CD4-positive, alpha-beta T cell (primary cell): ENCODE measurements at regions of chr9 and their contacts with region 1.

Region 1: DNA sequence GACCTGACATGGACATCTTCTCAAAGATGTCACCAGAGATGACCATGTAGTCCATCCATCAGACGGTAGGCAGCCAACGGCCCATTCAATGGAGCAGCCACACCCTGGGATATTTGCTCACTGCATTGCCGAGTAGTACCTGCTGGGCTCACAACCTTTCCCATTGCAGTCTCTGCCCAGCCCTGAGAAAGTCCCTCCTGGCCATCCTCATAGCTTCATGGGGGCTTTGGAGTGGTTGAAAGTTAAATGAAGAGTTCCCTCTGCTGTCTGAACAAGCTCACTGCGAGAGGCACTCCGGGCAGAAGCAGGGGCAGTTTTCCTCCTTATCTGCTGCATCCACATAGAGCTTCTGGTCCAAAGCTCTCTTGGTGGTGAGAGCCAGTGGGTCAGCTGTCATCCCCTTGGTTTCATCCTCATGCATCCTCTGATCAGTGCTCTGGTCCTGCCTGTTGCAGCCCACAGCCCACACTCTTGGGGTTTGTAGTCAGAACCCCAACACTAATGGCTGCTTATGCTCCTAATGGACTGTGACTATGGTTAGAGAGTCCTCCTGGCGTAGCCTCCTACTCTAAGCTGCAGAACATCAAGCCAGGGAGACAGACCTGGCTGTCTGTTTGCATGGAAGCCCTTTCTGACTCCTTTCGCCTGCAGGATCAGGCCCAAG is 23.4 kb downstream of the TNFSF8 start:
- DNase-seq: peak in 4 of 14 experiments; percentile 34 to 66 (median 56)
- ATAC-seq: no peak
- H3K4me3 ChIP-seq: no peak overlapping the region
- H3K4me3 Mint-ChIP-seq: no peak overlapping the region
- H3K27ac ChIP-seq: peak overlapping the region in 1 of 2 donors; percentile 7
- H3K27ac Mint-ChIP-seq: peak overlapping the region; percentile 85
- H3K4me1 ChIP-seq: peaks cover 84% of the 10 kb centered on the region
- H3K4me1 Mint-ChIP-seq: peaks cover 55% of the 10 kb centered on the region
- H3K27me3 ChIP-seq: no peaks in the 10 kb centered on the region
- H3K27me3 Mint-ChIP-seq: no peaks in the 10 kb centered on the region
- CTCF ChIP-seq: peak; percentile 69

Region 2: DNA sequence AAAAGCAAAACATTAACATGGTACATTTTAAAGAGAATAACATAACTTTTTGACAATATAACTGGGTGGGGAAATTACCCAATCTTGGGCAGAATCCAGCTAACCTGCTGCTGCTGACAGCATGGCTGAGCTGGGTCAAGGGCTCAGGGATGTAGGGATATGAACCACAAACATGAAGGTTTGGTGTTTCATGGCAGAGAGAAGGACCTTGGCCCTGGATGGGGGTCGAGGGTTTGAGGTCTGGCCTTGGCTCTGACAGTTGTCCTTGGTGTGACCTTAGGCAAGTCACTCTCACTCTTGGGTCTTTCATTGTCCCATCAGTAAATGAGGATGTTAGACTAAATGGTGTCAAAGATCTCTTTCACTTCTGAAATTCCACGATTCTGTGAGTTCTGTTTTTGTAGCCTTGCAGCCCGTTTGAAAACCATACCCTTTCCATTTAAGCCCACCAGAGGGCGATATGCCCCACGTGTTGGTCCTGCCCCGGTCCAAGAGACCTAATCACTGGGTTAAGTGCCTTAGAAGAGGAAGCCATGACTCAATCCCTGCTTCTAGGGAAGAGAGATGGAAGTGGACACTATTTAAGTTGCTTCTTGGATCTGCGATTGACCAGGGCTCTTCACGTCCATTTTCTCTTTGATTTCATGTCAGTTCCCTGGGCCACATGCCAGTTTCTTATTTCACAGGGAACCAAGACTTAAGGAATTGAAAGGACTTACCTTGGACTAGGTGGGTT is 168.3 kb before region 1 on chr9:
- CTCF ChIA-PET with region 1: interaction called, 10 read pairs
- POLR2A ChIA-PET with region 1: interaction called, 4 read pairs
- intact Hi-C with region 1: loop called (anchors 1 to 2 kb)
- DNase-seq: peak; percentile 53 to 89 (median 64)
- ATAC-seq: peak; percentile 88
- H3K4me3 ChIP-seq: no peak overlapping the region
- H3K4me3 Mint-ChIP-seq: peak overlapping the region; percentile 18
- H3K27ac ChIP-seq: no peak overlapping the region
- H3K27ac Mint-ChIP-seq: peak overlapping the region; percentile 85
- H3K4me1 ChIP-seq: peaks cover 40% of the 10 kb centered on the region
- H3K4me1 Mint-ChIP-seq: peaks cover 39% of the 10 kb centered on the region
- H3K27me3 ChIP-seq: no peaks in the 10 kb centered on the region
- H3K27me3 Mint-ChIP-seq: no peaks in the 10 kb centered on the region
- CTCF ChIP-seq: peak; percentile 88

Region 3: GRCh38 chr9:114869845-114870244 is 37.2 kb before region 1 on chr9:
- CTCF ChIA-PET with region 1: no interaction called
- POLR2A ChIA-PET with region 1: interaction called, 3 read pairs
- intact Hi-C with region 1: loop called in 1 of 2 experiments (anchors 5 kb)
- DNase-seq: peak in 9 of 14 experiments; percentile 1 to 74 (median 32)
- ATAC-seq: no peak
- H3K4me3 ChIP-seq: no peak overlapping the region
- H3K4me3 Mint-ChIP-seq: peak overlapping the region; percentile 62
- H3K27ac ChIP-seq: peak overlapping the region; percentile 36 to 47
- H3K27ac Mint-ChIP-seq: peak overlapping the region; percentile 42
- H3K4me1 ChIP-seq: peaks cover 17% of the 10 kb centered on the region
- H3K4me1 Mint-ChIP-seq: peaks cover 27% of the 10 kb centered on the region
- H3K27me3 ChIP-seq: no peaks in the 10 kb centered on the region
- H3K27me3 Mint-ChIP-seq: no peaks in the 10 kb centered on the region
- CTCF ChIP-seq: no peak

Region 4: DNA sequence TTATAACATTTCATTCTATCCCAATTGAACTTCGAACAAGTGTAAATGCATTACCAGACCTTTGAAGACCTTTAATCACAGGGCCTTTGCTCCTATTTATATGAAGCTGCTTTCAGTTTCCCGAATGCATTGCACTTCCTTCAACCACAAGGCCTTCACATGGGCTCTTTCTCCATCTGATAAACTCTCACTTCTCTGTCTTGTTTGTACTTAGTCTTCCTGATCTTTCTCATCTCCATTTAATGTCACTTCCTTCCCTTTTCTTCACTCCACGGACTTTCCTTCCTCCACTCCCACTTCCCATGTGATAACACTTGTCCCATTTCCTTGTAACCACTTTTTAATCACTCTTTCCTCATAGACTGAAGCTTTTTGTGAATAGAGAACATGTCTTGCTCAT is 285.2 kb after region 1 on chr9:
- CTCF ChIA-PET with region 1: no interaction called
- POLR2A ChIA-PET with region 1: no interaction called
- intact Hi-C with region 1: no loop called
- DNase-seq: no peak
- ATAC-seq: no peak
- H3K4me3 ChIP-seq: no peak overlapping the region
- H3K4me3 Mint-ChIP-seq: no peak overlapping the region
- H3K27ac ChIP-seq: no peak overlapping the region
- H3K27ac Mint-ChIP-seq: no peak overlapping the region
- H3K4me1 ChIP-seq: no peaks in the 10 kb centered on the region
- H3K4me1 Mint-ChIP-seq: no peaks in the 10 kb centered on the region
- H3K27me3 ChIP-seq: peaks cover 5 to 8% of the 10 kb centered on the region in 2 experiments
- H3K27me3 Mint-ChIP-seq: peaks cover 48% of the 10 kb centered on the region
- CTCF ChIP-seq: no peak